Transverse colon (tissue), 4 donors: ENCODE measurements at regions of chr16 and their contacts with region 1.

Region 1: DNA sequence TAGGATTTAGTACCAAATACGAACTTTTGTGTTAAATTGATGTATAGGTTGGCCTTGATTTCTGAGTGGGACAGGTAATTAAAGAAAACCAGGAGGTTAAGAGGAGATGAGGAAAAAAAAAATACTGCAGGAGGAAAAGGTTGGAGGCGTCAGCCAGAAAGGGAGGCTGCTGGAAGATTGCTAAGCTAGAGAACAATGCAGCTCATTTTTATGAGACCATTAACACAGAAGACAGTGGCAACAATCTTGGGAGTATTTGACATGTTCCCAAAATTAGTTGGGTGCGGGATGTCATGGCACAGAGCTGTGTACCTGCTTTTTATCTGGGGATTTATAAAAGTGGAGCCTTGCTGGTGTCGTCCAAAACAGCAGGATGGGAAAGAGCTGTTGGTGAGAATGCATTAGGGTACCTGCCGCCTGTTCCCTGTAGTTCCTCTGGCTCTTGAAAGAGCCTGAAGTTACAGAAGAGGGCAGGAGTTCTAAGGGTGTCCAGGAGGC is 229.3 kb downstream of the RBFOX1 start:
- DNase-seq: no peak
- H3K4me3 ChIP-seq: no peak overlapping the region
- H3K27ac ChIP-seq: no peak overlapping the region
- H3K4me1 ChIP-seq: no peaks in the 10 kb centered on the region
- H3K27me3 ChIP-seq: no peaks in the 10 kb centered on the region
- CTCF ChIP-seq: no peak
- EP300 ChIP-seq: no peak
- POLR2A ChIP-seq: no peak

Region 2: DNA sequence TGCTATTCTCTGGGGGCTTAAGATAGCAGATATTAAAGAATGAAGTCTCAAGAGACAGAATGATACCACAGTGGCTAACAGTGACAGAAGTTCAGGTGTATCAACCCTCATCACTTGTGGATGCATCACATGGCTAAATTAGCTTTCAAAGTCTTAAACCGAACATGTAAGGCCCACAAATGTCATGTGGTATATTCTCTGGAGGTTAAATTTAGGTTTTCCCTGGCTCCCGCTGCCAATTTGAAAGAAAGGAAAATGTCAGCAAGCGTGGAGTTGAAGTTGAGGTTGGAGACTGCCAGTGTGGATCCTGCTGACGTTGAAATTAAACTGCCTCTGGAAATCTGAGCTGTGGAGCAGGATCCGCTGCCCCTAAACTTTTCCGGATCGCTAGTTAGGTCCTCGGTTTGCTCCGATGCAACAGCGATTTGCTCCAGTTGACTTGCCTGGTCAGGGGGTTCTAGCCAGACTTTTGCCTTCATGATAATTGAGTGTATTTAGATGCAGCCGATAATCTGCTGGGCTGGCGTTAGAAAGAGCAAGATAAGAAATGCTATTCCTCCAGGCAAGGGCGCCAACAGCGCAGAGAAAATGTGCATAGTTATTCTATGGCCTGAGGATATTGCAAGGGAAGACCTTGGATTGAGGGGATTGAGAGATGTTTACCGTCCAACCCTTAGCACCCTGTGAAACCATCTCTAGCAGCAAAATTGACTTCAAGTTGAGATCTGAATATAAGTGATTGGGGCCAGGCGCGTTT is 584.5 kb after region 1 on chr16:
- in situ Hi-C with region 1: no loop called
- intact Hi-C with region 1: loop called (anchors 5 kb)
- DNase-seq: no peak
- H3K4me3 ChIP-seq: no peak overlapping the region
- H3K27ac ChIP-seq: no peak overlapping the region
- H3K4me1 ChIP-seq: no peaks in the 10 kb centered on the region
- H3K27me3 ChIP-seq: no peaks in the 10 kb centered on the region
- CTCF ChIP-seq: no peak
- EP300 ChIP-seq: no peak
- POLR2A ChIP-seq: no peak